IMR-90 (cell line): ENCODE measurements at regions of chr21 and their contacts with region 1.

Region 1: GRCh38 chr21:32979598-32980268 is 46.0 kb upstream of the OLIG2 start:
- DNase-seq: no peak
- ATAC-seq: no peak
- H3K4me3 ChIP-seq: no peak overlapping the region
- H3K27ac ChIP-seq: no peak overlapping the region
- H3K4me1 ChIP-seq: no peaks in the 10 kb centered on the region
- H3K27me3 ChIP-seq: peaks cover 18% of the 10 kb centered on the region
- CTCF ChIP-seq: no peak
- POLR2A ChIP-seq: no peak
- RAD21 ChIP-seq: no peak

Region 2: GRCh38 chr21:32653311-32653901 is 326.3 kb before region 1 on chr21:
- CTCF ChIA-PET with region 1: no interaction called
- POLR2A ChIA-PET with region 1: no interaction called
- dilution Hi-C with region 1: no loop called
- in situ Hi-C with region 1: no loop called
- intact Hi-C with region 1: loop called (anchors 10 kb)
- DNase-seq: peak; percentile 10
- ATAC-seq: peak; percentile 35; the same call in 1 of the 2 replicates
- H3K4me3 ChIP-seq: no peak overlapping the region
- H3K27ac ChIP-seq: no peak overlapping the region
- H3K4me1 ChIP-seq: no peaks in the 10 kb centered on the region
- H3K27me3 ChIP-seq: no peaks in the 10 kb centered on the region
- CTCF ChIP-seq: peak; percentile 53
- POLR2A ChIP-seq: no peak
- RAD21 ChIP-seq: peak; percentile 60